Dendritic cell treated with granulocyte-macrophage colony-stimulating factor and Interleukin-4, amounts not matched to agents 40 ng/mL and 50 ng/mL, for 4 days (primary cell): ENCODE measurements at regions of chr1 and their contacts with region 1.

Region 1: DNA sequence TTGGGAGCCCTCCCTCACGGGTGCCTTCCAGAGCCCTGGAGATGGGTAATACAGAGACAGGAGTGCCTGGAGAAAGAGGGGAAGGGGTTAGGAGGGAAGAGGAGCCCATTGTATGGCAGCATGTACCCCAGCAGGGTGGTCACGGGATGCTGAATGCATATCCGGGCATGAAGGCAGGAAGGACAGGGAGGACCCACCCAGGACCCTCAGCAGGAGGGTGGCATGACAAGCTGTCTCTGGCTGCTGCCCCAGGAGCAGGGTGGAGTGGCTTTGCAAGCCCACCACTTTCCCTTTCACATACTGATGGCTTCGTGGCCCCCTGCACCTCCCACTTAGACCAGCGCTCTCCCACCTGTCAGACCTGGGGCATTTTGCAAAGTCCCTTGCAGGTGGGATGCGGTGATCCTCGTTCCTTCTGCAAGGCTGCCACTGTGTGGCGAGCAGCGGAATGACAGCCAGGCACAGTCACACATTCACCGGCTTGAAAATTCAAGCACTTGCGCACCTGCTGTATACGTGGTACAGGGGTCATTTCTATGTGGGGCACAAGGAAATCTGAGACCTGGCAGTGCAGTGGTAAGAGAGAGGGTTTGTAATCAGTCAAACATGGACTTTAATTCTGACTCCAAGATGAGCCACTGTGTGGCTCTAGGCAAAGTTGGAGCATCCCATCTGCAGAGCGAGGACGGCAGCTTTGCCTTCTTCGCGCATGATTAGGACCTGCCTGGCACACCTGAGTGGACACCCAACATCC is 53.2 kb upstream of the TMEM51 start:
- H3K4me3 Mint-ChIP-seq: no peak overlapping the region
- H3K27ac Mint-ChIP-seq: no peak overlapping the region
- H3K4me1 Mint-ChIP-seq: peaks cover 16% of the 10 kb centered on the region
- H3K27me3 Mint-ChIP-seq: peaks cover 34% of the 10 kb centered on the region

Region 2: GRCh38 chr1:15062479-15063099 is 37.7 kb before region 1 on chr1:
- intact Hi-C with region 1: loop called (anchors 1 kb)
- H3K4me3 Mint-ChIP-seq: no peak overlapping the region
- H3K27ac Mint-ChIP-seq: no peak overlapping the region
- H3K4me1 Mint-ChIP-seq: no peaks in the 10 kb centered on the region
- H3K27me3 Mint-ChIP-seq: no peaks in the 10 kb centered on the region